ENCODE measurements at regions of chr13 and their contacts with region 1.

Region 1: DNA sequence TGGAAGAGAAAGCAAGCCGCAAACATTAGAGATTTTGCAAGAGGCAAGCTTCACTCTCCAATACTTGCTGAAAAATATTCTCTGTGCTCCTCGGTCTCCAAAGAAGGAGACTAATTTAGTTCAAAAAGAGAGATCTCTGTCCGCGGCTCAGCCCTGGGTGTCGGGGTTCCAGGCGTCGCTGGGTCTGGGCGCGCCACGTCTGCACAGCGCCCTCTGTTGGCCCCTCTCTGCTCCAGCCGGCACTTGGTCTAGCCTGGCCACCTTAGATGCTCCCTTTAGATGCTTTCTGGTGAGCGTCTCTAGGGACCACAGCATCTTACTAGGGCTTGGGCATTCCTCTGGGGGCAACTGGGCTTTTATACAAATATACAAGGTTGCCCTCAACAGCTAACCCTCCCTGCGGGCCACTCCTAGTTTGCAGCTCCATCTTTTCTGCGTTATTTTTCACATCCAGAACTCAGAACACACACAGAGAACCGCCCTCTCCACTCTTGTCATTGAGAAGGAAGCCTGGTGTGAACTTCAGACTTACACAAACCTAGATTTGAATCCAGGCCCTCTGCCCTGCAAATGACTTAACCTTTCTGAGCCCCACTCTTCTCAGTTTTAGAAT is 78.3 kb downstream of the CYSLTR2 start:
- DNase-seq: peak; percentile 25 to 59 (median 51)
- ATAC-seq: peak; percentile 88
- H3K4me3 ChIP-seq: peak overlapping the region; percentile 31
- H3K4me3 Mint-ChIP-seq: peak overlapping the region; percentile 56 to 85 (median 78)
- H3K27ac ChIP-seq: no peak overlapping the region
- H3K27ac Mint-ChIP-seq: peak overlapping the region in 1 of 9 donors; percentile 57
- H3K4me1 ChIP-seq: no peaks in the 10 kb centered on the region
- H3K4me1 Mint-ChIP-seq: peaks cover 0 to 12% (median 6%) of the 10 kb centered on the region in 7 donors
- H3K27me3 ChIP-seq: peaks cover 0 to 4% of the 10 kb centered on the region in 2 donors
- H3K27me3 Mint-ChIP-seq: peaks cover 0 to 5% (median 4%) of the 10 kb centered on the region in 5 donors

Region 2: DNA sequence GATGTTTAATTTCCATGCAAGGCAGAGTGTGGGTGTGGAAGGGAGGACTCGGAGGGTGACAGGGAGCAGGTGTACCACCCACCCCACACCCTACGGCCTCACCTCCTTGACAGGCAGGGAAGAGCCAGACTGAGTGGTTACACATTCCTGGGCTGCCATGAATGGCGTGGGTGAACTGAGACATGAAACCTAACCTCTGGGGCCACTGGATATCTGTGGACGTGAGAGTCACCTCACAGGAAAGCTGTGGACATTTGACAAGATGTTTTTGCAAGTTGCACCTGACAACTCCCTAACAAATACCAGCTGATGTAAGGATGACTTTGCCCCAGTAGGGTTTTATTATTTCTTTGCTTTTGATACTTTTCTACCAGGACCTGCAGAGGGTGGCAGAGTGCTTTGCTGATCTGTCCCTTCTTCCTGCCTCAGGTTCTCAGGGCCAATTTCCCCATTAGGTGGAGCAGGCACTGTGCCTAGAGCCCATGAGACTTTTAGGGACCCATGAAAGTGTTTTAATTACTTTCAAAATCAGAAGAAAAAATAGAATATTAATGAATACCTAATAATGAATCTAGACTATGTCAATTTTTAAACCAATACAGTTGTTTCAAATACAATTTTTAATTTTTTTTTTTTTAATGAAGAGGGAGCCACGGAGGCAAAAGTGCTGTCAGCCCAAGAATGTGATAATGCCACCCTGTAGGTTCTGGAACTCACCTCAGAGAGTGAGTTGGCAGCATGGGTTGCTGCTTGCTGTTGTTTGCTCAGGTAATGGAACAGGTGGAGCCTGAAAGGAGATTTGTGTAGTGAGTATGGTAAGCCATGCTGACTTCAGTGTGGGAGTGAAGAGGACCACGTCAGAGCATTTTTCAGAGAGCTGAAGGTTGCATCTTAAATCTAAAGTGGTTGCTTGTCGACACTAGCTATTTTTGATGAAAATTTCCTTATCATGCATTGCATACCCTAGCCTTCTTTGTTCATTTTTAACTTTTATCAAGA is 136.3 kb before region 1 on chr13:
- CTCF ChIA-PET with region 1: interaction called, 6 read pairs
- POLR2A ChIA-PET with region 1: no interaction called
- intact Hi-C with region 1: loop called (anchors 1 kb)
- DNase-seq: peak in 8 of 9 donors; percentile 24 to 79 (median 60)
- ATAC-seq: peak; percentile 96
- H3K4me3 ChIP-seq: no peak overlapping the region
- H3K4me3 Mint-ChIP-seq: no peak overlapping the region
- H3K27ac ChIP-seq: no peak overlapping the region
- H3K27ac Mint-ChIP-seq: peak overlapping the region in 1 of 9 donors; percentile 10
- H3K4me1 ChIP-seq: no peaks in the 10 kb centered on the region
- H3K4me1 Mint-ChIP-seq: peaks cover 0 to 3% (median 0%) of the 10 kb centered on the region in 7 donors
- H3K27me3 ChIP-seq: no peaks in the 10 kb centered on the region
- H3K27me3 Mint-ChIP-seq: peaks cover 0 to 19% (median 0%) of the 10 kb centered on the region in 5 donors

Region 3: DNA sequence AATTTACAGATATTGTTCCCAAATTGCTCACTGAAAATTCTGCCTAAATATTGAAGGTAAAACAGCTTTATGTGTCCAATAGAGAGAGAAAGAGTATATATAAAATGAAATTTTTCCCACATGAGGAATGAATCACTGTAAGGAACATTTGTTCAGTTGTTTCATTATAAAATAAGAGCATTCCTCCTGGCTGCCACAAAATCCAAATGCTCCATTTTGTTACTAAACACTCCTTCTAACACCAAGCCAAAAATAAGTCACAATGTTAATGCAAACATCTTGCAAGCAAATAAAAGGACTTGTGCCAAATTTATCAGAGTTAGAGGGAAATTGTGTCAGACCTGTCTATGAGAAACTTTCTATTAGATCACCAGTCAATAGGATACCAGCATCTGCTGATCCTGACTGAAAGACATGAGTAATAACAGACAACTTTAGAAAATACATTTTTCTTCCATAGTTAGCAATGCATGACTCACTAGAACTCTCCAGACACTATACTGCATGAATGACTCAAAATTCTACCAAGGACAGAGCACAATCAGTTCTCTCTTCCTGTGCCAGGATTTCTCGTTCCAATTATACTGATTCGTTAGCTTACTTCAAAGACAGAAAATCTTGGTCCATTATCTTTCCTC is 160.1 kb after region 1 on chr13:
- CTCF ChIA-PET with region 1: no interaction called
- POLR2A ChIA-PET with region 1: no interaction called
- intact Hi-C with region 1: no loop called
- DNase-seq: no peak
- ATAC-seq: peak; percentile 86
- H3K4me3 ChIP-seq: no peak overlapping the region
- H3K4me3 Mint-ChIP-seq: no peak overlapping the region
- H3K27ac ChIP-seq: no peak overlapping the region
- H3K27ac Mint-ChIP-seq: no peak overlapping the region
- H3K4me1 ChIP-seq: no peaks in the 10 kb centered on the region
- H3K4me1 Mint-ChIP-seq: peaks cover 0 to 16% (median 0%) of the 10 kb centered on the region in 7 donors
- H3K27me3 ChIP-seq: no peaks in the 10 kb centered on the region
- H3K27me3 Mint-ChIP-seq: no peaks in the 10 kb centered on the region

Region 4: DNA sequence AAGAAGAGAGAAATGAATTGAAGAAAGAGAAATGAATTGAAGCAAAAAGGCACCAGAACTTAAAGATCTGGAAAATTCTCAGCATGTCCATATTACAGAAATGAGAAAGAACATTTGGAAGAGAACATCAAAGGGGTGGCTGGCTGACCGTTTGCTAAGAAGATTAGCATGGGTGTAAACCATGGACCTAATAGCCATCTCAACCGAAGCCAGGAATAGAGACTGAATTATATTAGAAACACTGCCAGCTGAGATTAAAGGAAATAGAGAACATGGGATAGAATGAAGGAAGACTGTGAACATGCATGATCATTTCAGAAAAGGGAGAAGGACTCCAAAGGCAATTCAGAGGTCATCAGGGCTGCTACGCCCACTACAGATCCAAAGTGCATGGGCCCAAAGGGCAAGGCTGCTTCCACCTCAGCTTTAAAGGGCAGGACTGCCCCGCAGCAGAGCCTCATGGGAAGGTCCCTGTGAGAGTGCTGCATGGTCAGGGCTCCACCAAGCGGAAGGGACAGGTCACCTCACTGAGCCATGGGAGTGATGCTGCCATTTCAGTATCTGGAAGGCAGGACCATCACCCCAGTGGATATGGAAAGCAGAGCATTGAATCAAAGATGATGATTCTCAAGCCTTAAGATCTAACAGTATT is 266.7 kb after region 1 on chr13:
- CTCF ChIA-PET with region 1: no interaction called
- POLR2A ChIA-PET with region 1: no interaction called
- intact Hi-C with region 1: no loop called
- DNase-seq: no peak
- ATAC-seq: no peak
- H3K4me3 ChIP-seq: no peak overlapping the region
- H3K4me3 Mint-ChIP-seq: peak overlapping the region in 1 of 10 donors; percentile 2
- H3K27ac ChIP-seq: no peak overlapping the region
- H3K27ac Mint-ChIP-seq: peak overlapping the region in 1 of 9 donors; percentile 29
- H3K4me1 ChIP-seq: no peaks in the 10 kb centered on the region
- H3K4me1 Mint-ChIP-seq: peaks cover 10 to 56% (median 37%) of the 10 kb centered on the region in 7 donors
- H3K27me3 ChIP-seq: no peaks in the 10 kb centered on the region
- H3K27me3 Mint-ChIP-seq: no peaks in the 10 kb centered on the region